ENCODE measurements at regions of chr7 and their contacts with region 1.

Region 1: DNA sequence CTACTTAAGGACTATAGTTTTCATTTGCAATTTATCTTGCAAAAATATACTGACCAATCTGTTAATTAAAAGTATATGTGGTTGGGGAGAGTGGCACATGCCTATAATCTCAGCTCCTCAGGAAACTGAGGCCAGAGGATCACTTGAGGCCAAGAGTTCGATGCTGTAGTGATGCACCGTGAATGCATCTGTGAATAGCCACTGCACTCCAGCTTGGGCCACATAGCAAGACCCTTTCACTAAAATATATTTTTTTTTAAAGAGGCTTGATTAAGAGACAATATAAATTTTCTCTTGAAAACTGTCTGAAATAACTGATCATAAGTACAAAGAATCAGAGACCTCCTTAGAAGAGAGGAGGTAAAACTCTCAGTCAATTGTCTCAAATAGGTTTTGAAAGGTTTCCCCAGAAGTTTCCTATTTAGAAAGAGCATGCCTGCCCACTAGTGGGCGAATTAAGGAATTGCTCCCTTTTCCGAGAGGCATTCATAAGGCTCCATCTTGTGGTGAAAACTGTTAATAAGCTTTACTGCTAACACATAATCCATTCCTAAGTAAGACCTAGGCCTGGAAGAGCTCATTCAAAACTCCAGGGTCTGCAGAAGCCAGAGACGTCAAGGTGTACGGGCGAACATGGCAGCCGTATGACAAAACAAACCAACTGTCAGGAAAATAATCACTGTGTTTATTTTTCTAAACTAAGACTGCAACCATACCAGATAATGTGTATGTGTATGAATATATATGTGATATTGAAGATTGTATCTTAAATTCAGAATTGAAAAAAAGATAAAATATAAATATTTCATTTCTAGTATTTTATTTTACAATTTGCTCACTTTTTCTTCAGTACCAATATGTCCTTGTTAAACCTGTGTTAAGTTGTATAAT is 6.8 kb upstream of the TAS2R40 start:
- DNase-seq: peak; percentile 91
- H3K4me3 Mint-ChIP-seq: no peak overlapping the region
- H3K27ac Mint-ChIP-seq: no peak overlapping the region
- H3K4me1 Mint-ChIP-seq: no peaks in the 10 kb centered on the region
- H3K27me3 Mint-ChIP-seq: peaks cover 24% of the 10 kb centered on the region

Region 2: GRCh38 chr7:142323706-142324105 is 891.3 kb before region 1 on chr7:
- intact Hi-C with region 1: loop called (anchors 10 kb)
- DNase-seq: peak; percentile 78
- H3K4me3 Mint-ChIP-seq: peak overlapping the region; percentile 5
- H3K27ac Mint-ChIP-seq: no peak overlapping the region
- H3K4me1 Mint-ChIP-seq: peaks cover 7% of the 10 kb centered on the region
- H3K27me3 Mint-ChIP-seq: peaks cover 10% of the 10 kb centered on the region

Region 3: DNA sequence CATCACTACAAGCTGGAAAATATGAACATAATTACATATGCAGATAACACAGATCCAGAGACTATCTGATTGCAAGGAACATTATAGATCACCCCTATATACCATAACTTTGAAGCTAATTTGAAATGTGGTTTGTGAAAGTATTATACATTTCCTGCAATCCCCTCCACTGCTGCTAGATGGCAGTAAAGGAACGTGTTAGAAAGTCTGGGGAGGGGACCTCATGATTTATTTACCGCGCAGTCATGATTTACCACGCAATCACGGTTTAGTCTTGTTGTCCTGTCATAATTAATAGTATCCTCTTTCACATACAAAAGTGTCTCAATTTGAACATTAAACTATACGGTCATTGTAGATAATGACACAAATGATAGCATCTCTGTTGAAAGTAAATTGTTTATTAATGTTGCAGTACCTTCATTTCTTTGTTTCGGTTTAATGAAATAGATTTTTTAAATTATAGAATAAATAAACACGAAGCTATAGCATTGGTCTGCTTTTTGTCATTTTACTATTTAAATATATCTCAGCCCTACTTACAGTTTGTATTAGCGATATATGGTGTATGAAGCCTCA is 611.1 kb before region 1 on chr7:
- intact Hi-C with region 1: loop called (anchors 1 kb)
- DNase-seq: peak; percentile 86
- H3K4me3 Mint-ChIP-seq: peak overlapping the region; percentile 4
- H3K27ac Mint-ChIP-seq: no peak overlapping the region
- H3K4me1 Mint-ChIP-seq: peaks cover 3% of the 10 kb centered on the region
- H3K27me3 Mint-ChIP-seq: peaks cover 10% of the 10 kb centered on the region

Region 4: GRCh38 chr7:142853739-142854371 is 361.2 kb before region 1 on chr7:
- intact Hi-C with region 1: loop called (anchors 10 kb)
- DNase-seq: peak; percentile 90
- H3K4me3 Mint-ChIP-seq: peak overlapping the region; percentile 94
- H3K27ac Mint-ChIP-seq: peak overlapping the region; percentile 82
- H3K4me1 Mint-ChIP-seq: peaks cover 14% of the 10 kb centered on the region
- H3K27me3 Mint-ChIP-seq: peaks cover 17% of the 10 kb centered on the region